H1 (cell line): ENCODE measurements at regions of chr20 and their contacts with region 1.

Region 1: GRCh38 chr20:31661625-31662371 is 24.1 kb downstream of the COX4I2 start:
- DNase-seq: peak; percentile 23 to 88
- H3K4me3 ChIP-seq: peak overlapping the region; percentile 11 to 62 (median 48); a peak in 7 of 8 replicates
- H3K27ac ChIP-seq: no peak overlapping the region
- H3K4me1 ChIP-seq: peaks cover 0 to 7% (median 5%) of the 10 kb centered on the region in 4 experiments; a peak in 5 of 7 replicates
- H3K27me3 ChIP-seq: no peaks in the 10 kb centered on the region
- CTCF ChIP-seq: peak; percentile 79 to 92 (median 86)
- EP300 ChIP-seq: no peak
- POLR2A ChIP-seq: peak in 1 of 2 experiments; percentile 58; a peak in 2 of 3 replicates
- RAD21 ChIP-seq: peak; percentile 67 to 79

Region 2: DNA sequence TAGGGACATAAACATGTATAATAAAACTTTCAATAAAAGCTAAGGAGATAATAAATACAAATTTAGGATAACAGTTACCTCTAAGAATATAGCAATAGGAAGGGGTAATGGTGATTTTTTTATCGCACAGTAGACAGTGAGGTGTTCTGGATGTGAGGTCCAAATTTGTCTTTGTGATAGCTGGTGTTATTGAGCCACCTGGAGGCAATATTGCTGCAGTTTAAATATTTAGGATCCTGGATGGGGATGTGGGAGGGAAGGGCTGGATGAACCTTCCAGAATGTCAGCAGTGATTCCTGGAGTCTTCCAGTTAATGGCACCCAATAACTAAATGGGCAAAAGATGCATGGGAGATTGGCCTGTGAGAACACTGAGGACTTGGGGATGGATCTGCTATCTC is 207.4 kb before region 1 on chr20:
- CTCF ChIA-PET with region 1: no interaction called
- POLR2A ChIA-PET with region 1: no interaction called
- DNase-seq: no peak
- H3K4me3 ChIP-seq: no peak overlapping the region
- H3K27ac ChIP-seq: no peak overlapping the region
- H3K4me1 ChIP-seq: no peaks in the 10 kb centered on the region; a peak in 1 of 7 replicates
- H3K27me3 ChIP-seq: no peaks in the 10 kb centered on the region
- CTCF ChIP-seq: no peak
- EP300 ChIP-seq: no peak
- POLR2A ChIP-seq: no peak
- RAD21 ChIP-seq: no peak

Region 3: GRCh38 chr20:31630187-31630790 is 31.5 kb before region 1 on chr20:
- CTCF ChIA-PET with region 1: interaction called, 57 read pairs
- POLR2A ChIA-PET with region 1: no interaction called
- DNase-seq: no peak
- H3K4me3 ChIP-seq: no peak overlapping the region
- H3K27ac ChIP-seq: no peak overlapping the region
- H3K4me1 ChIP-seq: no peaks in the 10 kb centered on the region; a peak in 2 of 7 replicates
- H3K27me3 ChIP-seq: no peaks in the 10 kb centered on the region
- CTCF ChIP-seq: no peak
- EP300 ChIP-seq: no peak
- POLR2A ChIP-seq: no peak
- RAD21 ChIP-seq: no peak

Region 4: DNA sequence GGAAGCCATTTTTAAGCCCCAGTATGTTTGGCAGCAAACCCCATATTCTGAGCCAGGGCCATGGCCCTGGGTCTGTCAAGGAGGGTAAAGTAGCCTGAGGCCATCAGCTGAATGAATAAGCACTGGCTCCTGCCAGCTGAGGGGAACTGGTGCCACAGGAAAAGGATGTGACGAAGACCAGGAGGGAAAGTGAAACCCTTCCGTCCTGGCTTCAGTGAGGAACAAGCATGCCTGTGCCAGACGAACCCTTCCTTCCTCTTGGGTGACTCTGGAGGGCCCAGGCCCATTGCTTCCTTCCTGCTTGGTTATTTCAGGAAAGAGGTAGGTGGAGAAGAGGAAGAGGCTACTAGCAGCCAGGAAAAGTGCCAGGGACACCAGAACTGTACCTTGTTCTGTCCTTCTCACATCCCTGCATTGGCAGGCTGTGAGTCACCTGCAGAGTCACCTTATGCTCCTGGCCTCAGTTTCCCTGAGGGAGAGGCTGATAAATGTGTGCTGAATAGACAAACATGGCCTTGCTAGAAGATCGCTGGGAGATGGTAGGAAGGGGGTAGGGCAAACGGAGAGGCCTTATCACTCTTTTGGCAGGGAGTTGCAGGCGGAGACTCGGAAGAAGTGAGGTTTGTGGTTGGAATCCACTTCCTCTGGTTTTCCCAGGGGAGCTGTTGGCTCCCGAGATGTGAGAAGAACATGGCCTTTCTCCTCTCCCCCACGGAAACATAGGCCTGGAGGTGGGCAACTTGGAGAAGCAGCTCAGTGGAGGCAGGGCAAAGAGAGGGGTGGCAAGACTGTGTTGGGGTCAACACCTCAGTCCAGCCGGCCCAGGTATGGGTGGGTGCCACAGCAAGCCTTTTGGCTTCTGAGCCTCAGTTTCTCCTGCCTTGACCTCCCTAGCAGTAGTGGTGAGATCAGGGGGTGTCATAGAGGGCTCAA is 13.4 kb after region 1 on chr20:
- CTCF ChIA-PET with region 1: interaction called, 52 read pairs
- POLR2A ChIA-PET with region 1: interaction called, 7 read pairs
- DNase-seq: no peak
- H3K4me3 ChIP-seq: no peak overlapping the region
- H3K27ac ChIP-seq: no peak overlapping the region
- H3K4me1 ChIP-seq: peaks cover 3 to 7% (median 6%) of the 10 kb centered on the region in 4 experiments; a peak in 6 of 7 replicates
- H3K27me3 ChIP-seq: no peaks in the 10 kb centered on the region
- CTCF ChIP-seq: no peak
- EP300 ChIP-seq: no peak
- POLR2A ChIP-seq: no peak
- RAD21 ChIP-seq: no peak

Region 5: DNA sequence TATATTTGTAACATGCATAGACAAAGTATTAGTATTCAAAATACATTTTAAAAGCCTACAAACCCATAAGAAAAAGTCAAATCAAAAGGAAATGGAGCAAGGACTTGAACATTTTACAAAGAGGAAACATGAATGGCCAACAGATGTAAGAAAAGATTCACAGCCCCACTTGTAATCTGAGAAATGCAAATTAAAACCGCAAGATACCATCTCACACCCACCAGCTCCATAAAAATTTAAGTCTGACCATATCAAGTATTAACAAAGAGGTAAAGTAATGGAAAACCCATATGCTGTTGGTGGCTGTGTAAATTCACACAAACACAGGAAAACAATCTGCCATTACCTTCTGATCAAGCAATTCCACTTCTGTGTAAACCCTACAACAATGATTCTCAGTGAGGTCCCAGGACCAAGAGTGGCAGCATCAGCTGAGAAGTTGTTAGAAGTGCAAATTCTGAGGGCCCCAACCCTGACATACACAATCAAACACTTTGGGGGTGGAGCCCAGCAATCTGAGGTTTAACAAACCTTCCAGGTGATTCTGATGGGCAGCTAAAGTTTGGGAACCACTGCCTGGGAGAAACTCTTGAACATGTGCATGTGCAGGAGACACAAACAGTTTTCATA is 30.0 kb after region 1 on chr20:
- CTCF ChIA-PET with region 1: interaction called, 49 read pairs
- POLR2A ChIA-PET with region 1: interaction called, 4 read pairs
- DNase-seq: no peak
- H3K4me3 ChIP-seq: peak overlapping the region in 1 of 4 experiments; percentile 1; a peak in 1 of 8 replicates
- H3K27ac ChIP-seq: no peak overlapping the region
- H3K4me1 ChIP-seq: peaks cover 14 to 26% (median 20%) of the 10 kb centered on the region in 4 experiments
- H3K27me3 ChIP-seq: no peaks in the 10 kb centered on the region
- CTCF ChIP-seq: no peak
- EP300 ChIP-seq: no peak
- POLR2A ChIP-seq: no peak
- RAD21 ChIP-seq: no peak

Region 6: DNA sequence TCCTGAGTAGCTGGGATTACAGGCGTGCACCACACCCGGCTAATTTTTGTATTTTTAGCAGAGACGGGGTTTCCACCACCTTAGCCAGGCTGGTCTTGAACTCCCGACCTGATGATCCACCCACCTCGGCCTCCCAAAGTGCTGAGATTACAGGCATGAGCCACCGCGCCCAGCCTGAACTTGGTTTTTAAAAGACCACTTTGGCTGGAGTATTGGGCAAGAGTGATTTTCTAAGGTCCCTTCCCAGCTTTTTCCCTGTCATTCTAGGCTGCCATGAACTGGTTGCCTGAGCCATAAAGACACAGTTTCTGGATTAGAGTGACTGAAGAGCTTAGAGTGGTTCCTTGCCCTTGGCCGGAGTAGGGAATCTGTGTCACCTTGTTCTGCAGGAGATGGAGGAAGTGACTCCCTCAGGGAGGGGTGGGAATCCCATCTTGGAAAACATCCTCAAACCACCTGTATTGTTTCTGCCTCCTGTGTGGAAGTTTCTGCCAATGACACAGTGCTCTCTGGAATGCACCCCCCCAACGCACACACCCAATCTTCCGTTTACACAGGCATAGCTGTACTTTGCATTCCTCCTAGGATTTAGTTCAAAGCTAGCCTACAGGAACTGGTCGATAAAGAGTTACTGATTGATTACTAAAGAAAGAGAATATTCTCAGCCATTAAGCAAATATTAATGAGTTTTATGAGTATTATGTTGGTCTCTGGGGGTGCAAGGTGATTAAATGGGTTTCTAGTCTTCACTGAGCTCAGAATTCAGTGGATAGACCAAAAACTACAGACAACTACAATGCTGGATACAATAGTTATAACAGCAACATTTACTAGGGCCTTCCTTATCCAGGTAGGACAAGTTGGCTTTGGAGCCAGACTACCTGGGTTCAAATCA is 42.7 kb after region 1 on chr20:
- CTCF ChIA-PET with region 1: interaction called, 52 read pairs
- POLR2A ChIA-PET with region 1: interaction called, 3 read pairs
- DNase-seq: no peak
- H3K4me3 ChIP-seq: no peak overlapping the region
- H3K27ac ChIP-seq: peak overlapping the region; percentile 32; the same call in 1 of the 2 replicates
- H3K4me1 ChIP-seq: peaks cover 6 to 17% (median 14%) of the 10 kb centered on the region in 4 experiments
- H3K27me3 ChIP-seq: no peaks in the 10 kb centered on the region
- CTCF ChIP-seq: no peak
- EP300 ChIP-seq: no peak
- POLR2A ChIP-seq: no peak
- RAD21 ChIP-seq: no peak

Region 7: DNA sequence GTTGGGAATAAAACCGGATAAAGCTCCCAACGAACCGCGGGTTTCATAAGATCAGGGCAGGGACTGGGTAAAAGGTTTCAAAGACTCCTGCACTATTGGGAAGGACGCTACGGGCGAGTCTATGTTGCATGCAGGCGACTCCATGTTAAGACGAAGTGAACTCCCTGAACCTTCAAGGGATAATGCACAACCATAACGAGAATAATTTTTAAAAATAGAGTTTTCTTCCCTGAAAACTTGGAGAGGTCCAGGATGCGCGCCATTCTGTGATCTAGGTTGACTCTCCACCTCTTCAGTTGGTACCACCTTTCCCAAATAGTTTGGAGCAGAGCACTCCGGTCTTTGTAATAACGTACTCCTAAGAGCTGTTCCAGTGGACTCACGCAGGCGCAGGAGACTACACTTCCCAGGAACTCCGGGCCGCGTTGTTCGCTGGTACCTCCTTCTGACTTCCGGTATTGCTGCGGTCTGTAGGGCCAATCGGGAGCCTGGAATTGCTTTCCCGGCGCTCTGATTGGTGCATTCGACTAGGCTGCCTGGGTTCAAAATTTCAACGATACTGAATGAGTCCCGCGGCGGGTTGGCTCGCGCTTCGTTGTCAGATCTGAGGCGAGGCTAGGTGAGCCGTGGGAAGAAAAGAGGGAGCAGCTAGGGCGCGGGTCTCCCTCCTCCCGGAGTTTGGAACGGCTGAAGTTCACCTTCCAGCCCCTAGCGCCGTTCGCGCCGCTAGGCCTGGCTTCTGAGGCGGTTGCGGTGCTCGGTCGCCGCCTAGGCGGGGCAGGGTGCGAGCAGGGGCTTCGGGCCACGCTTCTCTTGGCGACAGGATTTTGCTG is 77.1 kb after region 1 on chr20 and contains the start of gene TPX2:
- CTCF ChIA-PET with region 1: interaction called, 13 read pairs
- POLR2A ChIA-PET with region 1: interaction called, 3 read pairs
- DNase-seq: peak; percentile 87 to 90
- H3K4me3 ChIP-seq: peak within 1 kb of the TSS; percentile 78 to 99 (median 82)
- H3K27ac ChIP-seq: peak within 1 kb of the TSS; percentile 57; the same call in 1 of the 2 replicates
- H3K4me1 ChIP-seq: peaks cover 0 to 8% (median 2%) of the 10 kb centered on the region in 4 experiments; a peak in 3 of 7 replicates
- H3K27me3 ChIP-seq: no peaks in the 10 kb centered on the region; a peak in 1 of 7 replicates
- CTCF ChIP-seq: peak; percentile 36 to 41 (median 40); a peak in 3 of 4 replicates
- EP300 ChIP-seq: peak in 1 of 2 experiments; percentile 59; a peak in 1 of 3 replicates
- POLR2A ChIP-seq: peak; percentile 86 to 90
- RAD21 ChIP-seq: no peak; a peak in 1 of 4 replicates
- total RNA-seq, gene TPX2: 122 and 125 TPM in 2 replicates